Pancreas (tissue), 10 donors: ENCODE measurements at regions of chrX and their contacts with region 1.

Region 1: GRCh38 chrX:17860811-17861488 is at the start of gene RAI2:
- DNase-seq: peak; percentile 44 to 77 (median 58)
- ATAC-seq: peak; percentile 53 to 79 (median 67)
- H3K4me3 ChIP-seq: peak within 1 kb of the TSS; percentile 34 to 57 (median 52)
- H3K27ac ChIP-seq: peak within 1 kb of the TSS; percentile 17 to 58 (median 44)
- H3K4me1 ChIP-seq: no peaks in the 10 kb centered on the region
- H3K27me3 ChIP-seq: no peaks in the 10 kb centered on the region
- CTCF ChIP-seq: no peak
- total RNA-seq, gene RAI2: 5.2 to 11.8 (median 6.1) TPM

Region 2: GRCh38 chrX:18041656-18042055 is 180.7 kb after region 1 on chrX:
- intact Hi-C with region 1: no loop called
- DNase-seq: no peak
- ATAC-seq: no peak
- H3K4me3 ChIP-seq: no peak overlapping the region
- H3K27ac ChIP-seq: no peak overlapping the region
- H3K4me1 ChIP-seq: no peaks in the 10 kb centered on the region
- H3K27me3 ChIP-seq: peaks cover 0 to 12% (median 0%) of the 10 kb centered on the region in 4 donors
- CTCF ChIP-seq: no peak

Region 3: DNA sequence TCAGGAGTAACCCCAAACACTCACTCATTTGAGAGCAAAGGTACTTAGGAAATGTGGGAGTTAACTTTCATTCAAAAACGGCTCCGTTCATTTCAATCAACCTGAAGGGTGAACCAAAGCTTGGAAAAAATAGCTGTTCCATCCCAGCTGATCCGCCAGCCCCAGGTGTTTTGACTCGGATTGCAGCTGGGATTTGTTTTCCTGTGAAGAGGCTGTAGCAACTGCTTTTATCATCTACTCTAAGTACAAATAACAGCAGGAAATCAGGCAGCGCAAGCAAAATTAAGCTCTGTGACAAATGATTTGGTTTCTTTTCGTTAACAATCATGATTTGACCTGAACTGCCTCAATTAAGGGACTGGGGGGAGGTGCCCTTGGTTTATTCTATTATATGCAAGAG is 205.0 kb after region 1 on chrX:
- intact Hi-C with region 1: no loop called
- DNase-seq: no peak
- ATAC-seq: no peak
- H3K4me3 ChIP-seq: no peak overlapping the region
- H3K27ac ChIP-seq: no peak overlapping the region
- H3K4me1 ChIP-seq: no peaks in the 10 kb centered on the region
- H3K27me3 ChIP-seq: peaks cover 0 to 4% (median 0%) of the 10 kb centered on the region in 4 donors
- CTCF ChIP-seq: no peak

Region 4: DNA sequence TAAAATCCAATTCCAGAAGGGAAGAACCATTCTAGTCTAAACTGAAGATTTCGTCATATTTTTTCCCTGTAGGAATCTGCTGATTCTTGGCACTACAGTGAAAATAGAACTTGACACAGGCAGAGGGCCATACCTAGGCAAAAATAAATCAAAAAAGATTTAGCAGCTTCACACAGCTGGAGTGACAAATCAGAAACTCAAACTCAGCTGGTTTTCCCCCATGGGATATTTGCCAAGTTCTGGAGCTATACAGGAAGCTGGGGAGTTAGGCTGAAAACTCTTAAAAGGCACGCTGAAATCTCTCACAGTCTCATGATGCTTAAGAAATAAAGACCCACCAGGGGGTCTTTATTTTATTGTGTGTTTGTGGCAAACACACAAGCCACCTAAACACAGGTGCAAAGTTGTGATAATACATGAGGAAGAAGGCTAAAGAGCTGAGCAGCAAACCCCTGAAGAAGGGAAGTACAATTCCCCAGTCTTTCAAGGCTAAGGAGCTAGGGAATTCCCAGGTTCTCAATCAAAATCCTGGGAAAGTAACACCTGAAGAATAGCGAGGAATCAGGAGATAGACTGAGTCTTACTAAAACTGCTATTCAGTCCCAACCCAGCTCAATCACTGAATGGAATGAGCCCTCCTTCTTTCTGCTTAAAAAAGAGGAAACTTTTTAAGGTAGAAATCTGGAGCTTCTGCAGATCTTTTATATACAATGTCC is 391.9 kb after region 1 on chrX:
- intact Hi-C with region 1: loop called in 1 of 3 experiments (anchors 10 kb)
- DNase-seq: peak in 3 of 6 donors; percentile 2 to 17 (median 15)
- ATAC-seq: peak; percentile 31 to 72 (median 54)
- H3K4me3 ChIP-seq: no peak overlapping the region
- H3K27ac ChIP-seq: no peak overlapping the region
- H3K4me1 ChIP-seq: peaks cover 0 to 3% (median 0%) of the 10 kb centered on the region in 3 donors
- H3K27me3 ChIP-seq: peaks cover 0 to 7% (median 1%) of the 10 kb centered on the region in 4 donors
- CTCF ChIP-seq: no peak